ENCODE measurements at regions of chr10 and their contacts with region 1.

Region 1: GRCh38 chr10:72223743-72224101 is 7.6 kb upstream of the ASCC1 start:
- DNase-seq: peak in 1 of 2 donors; percentile 67
- ATAC-seq: peak; percentile 14 to 44
- H3K4me3 ChIP-seq: peak overlapping the region in 1 of 4 donors; percentile 0
- H3K27ac ChIP-seq: peak overlapping the region; percentile 94 to 99 (median 98)
- H3K4me1 ChIP-seq: peaks cover 54 to 75% of the 10 kb centered on the region in 2 donors
- H3K27me3 ChIP-seq: no peaks in the 10 kb centered on the region
- CTCF ChIP-seq: no peak
- POLR2A ChIP-seq: no peak

Region 2: DNA sequence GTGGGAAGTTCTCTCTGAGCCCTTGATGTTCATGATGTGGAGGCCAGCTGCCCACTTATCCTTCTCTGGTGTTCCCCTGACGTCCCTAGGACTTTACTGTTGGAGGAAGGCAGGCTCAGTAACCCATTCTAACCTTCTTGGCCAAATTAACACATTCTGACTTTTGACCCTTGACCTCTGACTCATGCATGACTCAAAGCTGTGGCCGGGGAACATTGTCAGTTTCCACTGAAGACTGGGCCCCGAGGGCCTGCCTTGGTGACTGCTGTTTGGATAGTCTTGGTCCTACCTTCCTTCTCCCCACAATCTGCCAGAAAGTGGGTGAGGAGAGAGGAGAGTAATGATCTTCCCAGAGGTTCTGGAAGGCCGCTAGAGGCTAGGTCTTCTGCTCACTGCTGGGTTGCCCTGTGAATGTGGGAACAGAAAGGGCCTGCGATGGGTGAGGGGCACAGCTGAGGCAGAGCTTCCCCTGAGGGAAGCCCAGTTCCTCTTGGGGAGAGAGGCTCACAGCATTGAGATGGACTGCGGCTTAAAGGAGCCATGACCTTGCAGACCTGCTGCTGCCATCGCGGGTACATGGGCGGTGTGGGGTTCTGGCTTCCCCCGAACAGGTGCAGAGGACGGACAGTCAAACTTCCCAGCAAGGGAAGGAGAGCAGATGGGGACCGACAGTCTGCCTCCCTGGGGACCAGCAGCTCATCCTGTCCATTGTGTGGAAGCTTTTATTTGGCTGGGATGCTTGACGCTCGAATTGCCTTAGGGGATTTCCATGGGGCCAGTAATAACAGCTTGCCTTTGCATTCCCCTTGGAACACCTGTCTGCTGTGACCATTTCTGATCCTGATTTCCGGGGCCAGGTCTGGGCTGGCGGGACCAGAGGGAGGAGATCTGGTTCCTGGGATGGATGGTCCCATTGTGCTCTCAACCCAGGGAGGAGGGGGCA is 1507.6 kb before region 1 on chr10:
- in situ Hi-C with region 1: no loop called
- intact Hi-C with region 1: no loop called
- DNase-seq: no peak
- ATAC-seq: no peak
- H3K4me3 ChIP-seq: no peak overlapping the region
- H3K27ac ChIP-seq: no peak overlapping the region
- H3K4me1 ChIP-seq: no peaks in the 10 kb centered on the region
- H3K27me3 ChIP-seq: no peaks in the 10 kb centered on the region
- CTCF ChIP-seq: no peak
- POLR2A ChIP-seq: no peak

Region 3: GRCh38 chr10:72133517-72133916 is 90.2 kb before region 1 on chr10:
- in situ Hi-C with region 1: no loop called
- intact Hi-C with region 1: loop called (anchors 5 kb)
- DNase-seq: no peak
- ATAC-seq: no peak
- H3K4me3 ChIP-seq: no peak overlapping the region
- H3K27ac ChIP-seq: no peak overlapping the region
- H3K4me1 ChIP-seq: peaks cover 0 to 6% of the 10 kb centered on the region in 2 donors
- H3K27me3 ChIP-seq: no peaks in the 10 kb centered on the region
- CTCF ChIP-seq: no peak
- POLR2A ChIP-seq: no peak

Region 4: DNA sequence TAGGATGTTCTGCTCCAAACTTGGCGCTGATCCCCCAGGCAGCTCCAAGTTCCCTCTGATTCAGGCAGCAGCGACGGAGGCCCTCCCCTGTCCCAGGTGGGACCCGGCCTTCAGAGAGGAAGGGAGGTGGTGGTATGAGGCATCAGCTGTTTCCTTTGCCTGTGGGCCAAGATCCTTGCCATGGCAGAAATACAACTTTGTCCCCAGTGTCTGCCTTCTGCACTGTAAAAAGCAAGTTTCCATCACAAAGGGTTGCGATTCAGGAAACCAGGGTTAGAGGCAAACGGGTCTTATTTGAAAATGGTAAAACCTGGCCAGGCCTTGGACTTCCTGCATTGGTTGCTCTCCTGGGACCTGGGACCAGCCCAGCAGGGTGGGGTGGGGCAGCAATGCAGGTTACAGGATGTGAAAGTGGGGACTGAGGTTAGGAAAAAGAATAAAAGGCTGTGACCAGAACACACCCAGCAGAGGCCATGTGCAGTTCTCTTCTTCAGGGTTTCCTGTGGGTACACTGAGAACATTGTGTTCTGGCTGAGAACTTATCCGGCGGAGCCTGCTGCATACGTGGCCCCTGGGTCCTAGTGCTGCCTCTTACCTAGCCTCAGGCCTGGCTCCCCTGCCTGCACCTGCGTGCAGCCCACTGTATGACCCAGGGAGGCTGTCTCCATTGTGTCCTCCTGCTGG is 24.9 kb after region 1 on chr10:
- in situ Hi-C with region 1: no loop called
- intact Hi-C with region 1: loop called (anchors 1 kb)
- DNase-seq: peak; percentile 91 to 94
- ATAC-seq: peak; percentile 85 to 87
- H3K4me3 ChIP-seq: peak overlapping the region; percentile 18 to 37 (median 34)
- H3K27ac ChIP-seq: peak overlapping the region; percentile 94 to 99 (median 98)
- H3K4me1 ChIP-seq: peaks cover 81 to 98% of the 10 kb centered on the region in 2 donors
- H3K27me3 ChIP-seq: no peaks in the 10 kb centered on the region
- CTCF ChIP-seq: no peak
- POLR2A ChIP-seq: peak; percentile 77 to 87